Activated CD4-positive, alpha-beta T cell treated with anti-CD3 and anti-CD28 coated beads, Interleukin-2, amount 10 ng/mL, durations not matched to agents 24 days and 14 days (primary cell): ENCODE measurements at regions of chr1 and their contacts with region 1.

Region 1: DNA sequence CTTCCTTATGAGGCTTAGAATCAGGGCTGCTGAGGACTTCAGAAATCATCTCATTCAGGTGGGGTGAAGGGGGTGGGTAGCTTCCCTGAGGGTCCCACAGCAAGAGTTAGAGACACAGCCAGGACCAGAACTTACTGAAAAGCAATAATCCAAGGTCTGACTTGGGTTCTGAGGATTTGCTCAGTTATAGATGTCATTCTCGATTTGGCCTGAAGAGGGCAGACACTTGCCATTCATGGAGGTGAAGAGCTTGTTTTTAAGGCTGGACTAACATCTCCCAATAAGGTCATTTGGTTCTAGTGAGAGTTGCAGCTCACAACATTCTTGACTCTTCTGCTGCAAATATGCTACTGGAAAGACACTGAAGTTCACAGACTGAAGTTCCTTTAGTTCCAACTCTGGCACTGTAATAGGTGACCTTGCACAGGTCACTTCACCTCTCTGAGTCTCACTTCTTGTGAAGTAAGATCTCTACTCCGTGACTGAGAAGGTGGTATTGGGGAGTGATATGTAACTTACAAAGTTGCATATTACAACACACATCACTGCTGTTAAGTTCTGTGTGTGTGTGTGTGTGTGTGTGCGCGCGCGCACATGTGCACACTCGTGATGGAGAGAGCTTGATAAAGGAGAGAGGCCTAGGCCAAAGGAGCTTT is 69.8 kb upstream of the DIRAS3 start:
- DNase-seq: peak; percentile 82
- H3K4me3 Mint-ChIP-seq: no peak overlapping the region
- H3K27ac Mint-ChIP-seq: no peak overlapping the region
- H3K4me1 Mint-ChIP-seq: peaks cover 3% of the 10 kb centered on the region
- H3K27me3 Mint-ChIP-seq: no peaks in the 10 kb centered on the region

Region 2: DNA sequence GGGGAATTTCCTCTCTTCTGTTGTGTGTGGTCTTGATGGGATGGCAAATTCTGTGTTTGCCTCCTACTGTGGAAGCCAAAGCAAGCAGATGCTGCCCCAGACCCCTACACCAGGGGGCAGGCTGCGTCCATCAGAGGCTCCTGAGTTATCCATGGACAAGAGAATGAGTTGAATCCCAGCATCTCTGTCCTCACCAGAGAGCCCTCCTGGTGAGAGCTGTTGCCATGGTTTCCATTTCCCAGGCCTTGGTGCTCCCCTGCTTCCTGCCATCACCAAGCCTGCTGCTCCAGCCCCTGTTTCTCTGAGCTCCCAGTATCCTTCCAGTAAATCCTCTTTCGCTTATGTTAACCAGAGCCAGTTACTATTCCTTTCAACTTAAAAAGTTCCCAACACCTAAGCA is 266.6 kb before region 1 on chr1:
- intact Hi-C with region 1: loop called (anchors 2 kb)
- DNase-seq: peak; percentile 62
- H3K4me3 Mint-ChIP-seq: no peak overlapping the region
- H3K27ac Mint-ChIP-seq: no peak overlapping the region
- H3K4me1 Mint-ChIP-seq: no peaks in the 10 kb centered on the region
- H3K27me3 Mint-ChIP-seq: peaks cover 9% of the 10 kb centered on the region

Region 3: GRCh38 chr1:68074472-68074871 is 45.8 kb before region 1 on chr1:
- intact Hi-C with region 1: no loop called
- DNase-seq: no peak
- H3K4me3 Mint-ChIP-seq: no peak overlapping the region
- H3K27ac Mint-ChIP-seq: no peak overlapping the region
- H3K4me1 Mint-ChIP-seq: no peaks in the 10 kb centered on the region
- H3K27me3 Mint-ChIP-seq: no peaks in the 10 kb centered on the region

Region 4: GRCh38 chr1:68346188-68346808 is 226.0 kb after region 1 on chr1:
- intact Hi-C with region 1: loop called (anchors 1 kb)
- DNase-seq: no peak
- H3K4me3 Mint-ChIP-seq: no peak overlapping the region
- H3K27ac Mint-ChIP-seq: no peak overlapping the region
- H3K4me1 Mint-ChIP-seq: no peaks in the 10 kb centered on the region
- H3K27me3 Mint-ChIP-seq: peaks cover 2% of the 10 kb centered on the region

Region 5: GRCh38 chr1:68442822-68443556 is 322.7 kb after region 1 on chr1:
- intact Hi-C with region 1: loop called (anchors 1 kb)
- DNase-seq: peak; percentile 73
- H3K4me3 Mint-ChIP-seq: no peak overlapping the region
- H3K27ac Mint-ChIP-seq: no peak overlapping the region
- H3K4me1 Mint-ChIP-seq: no peaks in the 10 kb centered on the region
- H3K27me3 Mint-ChIP-seq: no peaks in the 10 kb centered on the region

Region 6: DNA sequence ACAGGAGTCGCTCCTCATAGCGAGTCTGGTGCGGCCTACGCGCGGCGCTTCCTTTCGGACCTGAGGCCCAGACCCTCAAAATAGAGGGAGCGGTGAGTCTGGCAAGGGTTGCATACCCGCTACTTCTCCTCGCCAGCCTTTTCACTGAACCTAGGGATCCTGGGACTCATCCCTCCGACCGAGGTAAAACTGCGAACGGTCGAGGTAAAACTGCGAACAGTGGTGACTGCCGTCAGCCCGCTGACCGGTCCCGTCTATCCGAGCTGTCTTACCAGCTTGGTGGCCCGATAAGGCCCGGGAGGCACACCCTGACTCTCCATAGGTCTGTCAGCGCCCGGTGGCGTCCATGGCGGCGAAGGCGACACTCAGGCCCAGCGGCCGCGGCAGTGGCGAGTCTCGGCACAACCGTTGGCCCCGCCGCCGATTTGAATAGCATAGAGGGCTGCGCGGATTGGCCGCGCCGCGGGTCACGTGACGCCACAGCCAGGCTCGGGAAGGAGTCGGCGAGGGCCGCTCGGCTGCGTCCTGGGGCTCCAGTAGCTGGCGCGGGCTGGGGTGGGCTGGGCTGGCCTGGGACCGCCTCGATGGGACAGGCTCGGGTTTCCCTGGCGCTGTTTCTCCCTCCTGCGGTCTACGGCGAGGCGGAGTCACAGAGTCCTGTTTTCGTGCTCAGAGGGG is 376.6 kb after region 1 on chr1 and contains the start of gene DEPDC1:
- intact Hi-C with region 1: loop called (anchors 2 kb)
- DNase-seq: peak; percentile 97
- H3K4me3 Mint-ChIP-seq: peak within 1 kb of the TSS; percentile 92
- H3K27ac Mint-ChIP-seq: peak within 1 kb of the TSS; percentile 86
- H3K4me1 Mint-ChIP-seq: peaks cover 19% of the 10 kb centered on the region
- H3K27me3 Mint-ChIP-seq: peaks cover 35% of the 10 kb centered on the region
- total RNA-seq, gene DEPDC1: 10.8 and 13.3 TPM in 2 replicates

Region 7: GRCh38 chr1:69737527-69738185 is 1617.4 kb after region 1 on chr1:
- intact Hi-C with region 1: loop called (anchors 1 kb)
- DNase-seq: peak; percentile 77
- H3K4me3 Mint-ChIP-seq: no peak overlapping the region
- H3K27ac Mint-ChIP-seq: no peak overlapping the region
- H3K4me1 Mint-ChIP-seq: no peaks in the 10 kb centered on the region
- H3K27me3 Mint-ChIP-seq: no peaks in the 10 kb centered on the region